ENCODE measurements at regions of chr5 and their contacts with region 1.

Region 1: DNA sequence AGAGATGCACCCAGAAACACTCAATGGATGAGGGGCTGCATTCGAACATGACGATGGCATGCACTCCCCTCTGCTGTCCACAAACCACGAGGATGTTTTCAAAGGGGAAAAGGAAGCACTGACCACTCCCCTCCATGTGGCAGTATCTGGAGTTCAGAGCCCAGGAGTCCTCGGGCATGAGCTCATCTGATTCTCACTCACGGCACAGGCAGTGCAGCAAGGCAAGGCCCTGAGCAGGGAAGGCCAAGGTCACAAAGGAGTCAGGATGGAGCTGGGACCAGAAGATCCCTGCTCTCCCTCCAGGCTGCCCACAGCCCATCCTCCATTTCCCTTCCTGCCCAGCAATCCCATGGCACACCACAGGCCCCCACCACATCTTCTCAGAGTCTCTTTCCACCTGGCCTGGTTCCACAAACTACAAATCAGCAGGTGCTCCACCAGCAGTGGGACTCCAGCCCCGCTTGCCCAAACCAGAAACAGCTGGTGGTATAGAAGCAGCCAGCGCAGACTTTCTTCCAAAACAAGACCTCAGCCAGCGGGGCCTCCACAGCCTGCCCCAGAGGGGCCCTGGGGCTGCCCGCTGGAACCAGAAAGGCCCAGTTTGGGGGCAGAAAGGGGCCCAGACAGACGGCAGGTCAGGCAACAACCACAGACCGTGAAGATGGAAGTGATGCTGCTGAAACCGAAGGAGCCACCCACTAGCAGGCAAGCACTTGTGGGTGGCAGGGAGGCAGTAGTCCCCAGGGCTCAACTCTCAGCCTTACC is 12.2 kb downstream of the TNIP1 start:
- DNase-seq: peak; percentile 58
- ATAC-seq: peak; percentile 66
- H3K4me3 Mint-ChIP-seq: no peak overlapping the region
- H3K27ac Mint-ChIP-seq: peak overlapping the region; percentile 67
- H3K4me1 Mint-ChIP-seq: peaks cover 61% of the 10 kb centered on the region
- H3K27me3 Mint-ChIP-seq: no peaks in the 10 kb centered on the region

Region 2: DNA sequence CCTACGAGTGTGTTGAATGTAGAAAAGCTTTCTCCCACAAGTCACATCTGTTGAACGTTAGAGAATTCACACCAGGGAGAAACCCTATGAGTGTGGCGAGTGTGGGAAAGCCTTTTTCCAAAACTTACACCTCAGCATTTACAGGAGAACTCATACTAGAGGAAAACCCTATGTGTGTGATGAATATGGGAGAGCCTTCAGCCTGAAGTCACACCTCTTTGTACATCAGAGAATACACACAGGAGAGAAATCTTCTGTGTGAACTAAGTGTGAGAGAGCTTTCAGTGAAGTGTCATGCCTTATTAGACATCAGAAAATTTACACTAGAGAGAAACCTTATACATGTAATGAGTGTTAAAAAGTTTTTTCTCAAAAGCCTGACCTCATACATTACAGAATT is 90.0 kb before region 1 on chr5:
- CTCF ChIA-PET with region 1: no interaction called
- DNase-seq: no peak
- ATAC-seq: no peak
- H3K4me3 Mint-ChIP-seq: no peak overlapping the region
- H3K27ac Mint-ChIP-seq: no peak overlapping the region
- H3K4me1 Mint-ChIP-seq: no peaks in the 10 kb centered on the region
- H3K27me3 Mint-ChIP-seq: no peaks in the 10 kb centered on the region

Region 3: DNA sequence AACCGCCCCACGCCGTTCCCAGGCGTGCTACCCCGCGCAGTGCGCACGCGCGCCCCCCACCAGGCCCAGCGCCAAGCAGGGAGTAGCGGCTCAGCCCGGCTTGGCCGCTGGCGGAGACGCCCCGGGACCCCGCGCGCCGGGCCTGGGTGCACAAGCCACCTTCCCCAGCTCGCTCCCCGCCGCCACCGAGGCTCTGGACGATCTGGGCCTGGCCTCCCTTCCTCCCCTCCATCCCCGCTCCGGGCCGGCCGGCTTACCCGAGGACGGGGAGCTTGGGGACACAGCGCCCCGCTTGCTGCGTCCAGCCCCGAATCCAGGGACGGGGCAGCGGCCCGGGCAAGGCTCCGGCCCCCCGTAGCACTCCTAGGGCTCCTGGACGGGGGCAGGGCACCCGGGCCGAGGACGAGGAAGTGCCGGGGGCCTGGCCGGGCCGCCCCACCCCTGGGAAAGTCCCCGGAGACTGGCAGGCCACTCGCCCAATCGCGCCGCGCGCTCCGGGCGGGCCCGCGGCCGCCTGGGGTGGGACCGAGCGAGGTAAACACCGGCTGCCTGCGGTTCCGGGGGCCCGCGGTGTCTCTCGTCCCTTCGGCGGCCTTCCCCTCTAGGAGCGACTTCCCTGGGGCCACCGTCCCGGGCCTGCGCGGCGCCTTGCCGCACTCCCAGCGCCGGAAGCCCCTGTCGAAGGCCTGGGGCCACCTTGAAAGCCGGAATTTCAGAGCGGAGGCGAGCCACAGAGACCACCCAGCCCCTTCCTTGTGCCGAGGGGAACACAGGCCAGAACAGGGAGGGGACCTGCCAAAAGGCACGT is 12.2 kb after region 1 on chr5 and contains the start of gene TNIP1:
- CTCF ChIA-PET with region 1: interaction called, 11 read pairs
- DNase-seq: peak; percentile 94
- ATAC-seq: peak; percentile 89
- H3K4me3 Mint-ChIP-seq: peak within 1 kb of the TSS; percentile 78
- H3K27ac Mint-ChIP-seq: peak within 1 kb of the TSS; percentile 78
- H3K4me1 Mint-ChIP-seq: peaks cover 78% of the 10 kb centered on the region
- H3K27me3 Mint-ChIP-seq: no peaks in the 10 kb centered on the region
- total RNA-seq, gene TNIP1: 136 to 201 TPM

Region 4: GRCh38 chr5:151208481-151208914 is 139.9 kb after region 1 on chr5:
- CTCF ChIA-PET with region 1: no interaction called
- DNase-seq: no peak
- ATAC-seq: no peak
- H3K4me3 Mint-ChIP-seq: no peak overlapping the region
- H3K27ac Mint-ChIP-seq: peak overlapping the region; percentile 67
- H3K4me1 Mint-ChIP-seq: peaks cover 65% of the 10 kb centered on the region
- H3K27me3 Mint-ChIP-seq: no peaks in the 10 kb centered on the region

Measured in activated CD8-positive, alpha-beta memory T cell treated with anti-CD3 and anti-CD28 coated beads, Interleukin-2, amount 10 ng/mL, durations not matched to agents 7 days and 5 days (primary cell).